Activated T-helper 1 cell treated with anti-CD3 and anti-CD28 coated beads, Interleukin-12 subunit alpha, Interleukin-12 subunit beta, Interleukin-2, Interleukin-4 antibody, amounts not matched to agents 30 ng/mL and 10 ng/mL and 1 ng/mL, durations not matched to agents 14 hours and 24 hours and 36 hours (primary cell): ENCODE measurements at regions of chr6 and their contacts with region 1.

Region 1: DNA sequence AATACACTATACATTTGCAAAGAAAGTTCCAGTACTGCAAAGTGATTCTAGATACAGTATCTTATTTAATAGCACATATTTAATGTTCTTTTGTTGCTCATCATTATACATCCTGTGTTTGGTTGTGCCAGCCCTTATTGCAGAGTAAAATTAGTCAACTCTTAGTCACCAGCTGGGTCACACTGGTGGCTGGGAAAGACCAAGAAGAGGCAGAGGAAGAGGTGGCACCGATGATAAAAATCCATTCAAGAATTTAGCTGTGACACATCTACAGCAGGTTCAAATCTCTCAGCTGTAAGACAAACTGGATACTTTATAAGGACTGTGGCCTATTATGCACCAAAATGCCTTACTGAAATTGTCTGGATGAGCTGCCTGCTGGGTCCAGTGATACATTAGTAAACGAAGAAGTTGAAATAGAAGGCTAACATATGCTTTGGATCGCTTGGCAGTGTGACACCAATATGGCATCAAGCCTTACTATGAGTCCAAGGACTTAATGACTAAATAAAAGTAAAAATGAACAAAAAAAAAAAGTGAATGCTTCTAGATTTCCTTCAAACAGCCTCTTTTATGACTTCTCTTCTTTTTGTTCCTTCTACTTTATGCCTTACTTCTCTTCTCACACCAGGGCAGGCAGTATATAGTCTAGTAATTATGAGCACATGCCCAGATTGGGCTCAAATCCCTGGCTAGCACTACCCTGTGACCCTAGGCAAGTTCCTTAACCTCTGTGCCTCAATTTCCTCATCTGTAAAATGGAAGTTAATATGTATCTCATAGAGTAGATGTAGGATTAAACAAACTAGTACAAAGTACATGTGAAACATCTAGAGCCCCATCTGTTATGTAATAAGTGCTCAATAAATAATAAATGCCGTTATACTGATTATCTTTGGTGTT is 29.4 kb upstream of the RNF8 start:
- DNase-seq: no peak
- H3K4me3 Mint-ChIP-seq: no peak overlapping the region
- H3K27ac Mint-ChIP-seq: peak overlapping the region; percentile 64
- H3K4me1 Mint-ChIP-seq: peaks cover 19% of the 10 kb centered on the region
- H3K27me3 Mint-ChIP-seq: no peaks in the 10 kb centered on the region

Region 2: GRCh38 chr6:37005061-37005810 is 319.1 kb before region 1 on chr6 and contains the start of gene FGD2:
- intact Hi-C with region 1: no loop called
- DNase-seq: no peak
- H3K4me3 Mint-ChIP-seq: no peak within 1 kb of the TSS
- H3K27ac Mint-ChIP-seq: peak within 1 kb of the TSS; percentile 32
- H3K4me1 Mint-ChIP-seq: peaks cover 14% of the 10 kb centered on the region
- H3K27me3 Mint-ChIP-seq: no peaks in the 10 kb centered on the region
- total RNA-seq, gene FGD2: 0.65 and 1.5 TPM in 2 replicates

Region 3: GRCh38 chr6:37353761-37354525 is 29.6 kb after region 1 on chr6 and contains the start of gene RNF8:
- intact Hi-C with region 1: loop called (anchors 1 kb)
- DNase-seq: peak; percentile 90
- H3K4me3 Mint-ChIP-seq: peak within 1 kb of the TSS; percentile 94
- H3K27ac Mint-ChIP-seq: peak within 1 kb of the TSS; percentile 90
- H3K4me1 Mint-ChIP-seq: peaks cover 47% of the 10 kb centered on the region
- H3K27me3 Mint-ChIP-seq: peaks cover 7% of the 10 kb centered on the region
- total RNA-seq, gene RNF8: 30.0 and 34.2 TPM in 2 replicates

Region 4: DNA sequence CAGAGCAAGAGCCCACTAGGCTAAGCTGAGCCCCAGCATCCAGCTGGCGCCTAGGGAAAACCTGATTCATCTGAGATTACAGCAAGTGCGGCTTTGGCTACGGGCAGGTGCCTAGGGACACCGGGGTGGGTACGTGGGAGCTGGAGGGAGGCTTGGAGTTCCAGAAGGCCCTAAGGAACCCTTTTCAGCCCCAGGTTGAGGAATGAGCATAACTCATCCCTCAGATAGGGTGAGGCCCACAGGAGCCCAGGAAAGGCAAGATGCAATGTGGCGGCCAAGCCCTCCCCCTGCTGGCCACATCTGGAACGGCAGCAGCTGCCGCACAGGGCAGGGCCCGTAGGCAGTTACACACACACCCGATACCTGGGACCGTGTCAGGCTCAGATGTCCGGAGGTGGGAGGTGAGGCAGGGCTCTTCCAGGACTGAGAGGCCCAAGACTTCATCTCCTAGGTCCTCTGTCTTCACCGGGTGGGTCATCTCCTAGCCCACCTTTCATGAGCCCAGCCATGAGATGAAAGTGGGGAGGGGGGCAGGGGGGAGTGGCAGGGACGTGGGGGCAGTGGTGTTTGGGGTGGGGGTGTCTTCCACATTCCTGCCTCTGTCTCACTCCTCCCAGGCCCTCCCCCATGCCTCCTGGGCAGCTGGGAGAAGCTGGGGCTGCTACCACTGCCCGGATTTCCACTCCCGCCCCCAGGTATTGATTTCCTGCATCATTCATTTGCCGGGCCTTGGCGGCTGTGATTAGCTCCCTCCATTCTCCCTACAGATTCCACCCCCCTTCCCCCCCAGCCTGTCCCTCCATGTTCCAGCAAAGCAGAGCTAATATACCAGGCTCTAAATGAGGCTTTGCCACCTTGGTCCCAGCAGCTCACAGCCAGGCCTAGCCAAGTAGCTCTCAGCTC is 367.8 kb after region 1 on chr6:
- intact Hi-C with region 1: loop called (anchors 1 kb)
- DNase-seq: peak; percentile 65
- H3K4me3 Mint-ChIP-seq: no peak overlapping the region
- H3K27ac Mint-ChIP-seq: no peak overlapping the region
- H3K4me1 Mint-ChIP-seq: peaks cover 18% of the 10 kb centered on the region
- H3K27me3 Mint-ChIP-seq: peaks cover 28% of the 10 kb centered on the region